Adrenal gland (tissue), 19 donors: ENCODE measurements at regions of chr15 and their contacts with region 1.

Region 1: DNA sequence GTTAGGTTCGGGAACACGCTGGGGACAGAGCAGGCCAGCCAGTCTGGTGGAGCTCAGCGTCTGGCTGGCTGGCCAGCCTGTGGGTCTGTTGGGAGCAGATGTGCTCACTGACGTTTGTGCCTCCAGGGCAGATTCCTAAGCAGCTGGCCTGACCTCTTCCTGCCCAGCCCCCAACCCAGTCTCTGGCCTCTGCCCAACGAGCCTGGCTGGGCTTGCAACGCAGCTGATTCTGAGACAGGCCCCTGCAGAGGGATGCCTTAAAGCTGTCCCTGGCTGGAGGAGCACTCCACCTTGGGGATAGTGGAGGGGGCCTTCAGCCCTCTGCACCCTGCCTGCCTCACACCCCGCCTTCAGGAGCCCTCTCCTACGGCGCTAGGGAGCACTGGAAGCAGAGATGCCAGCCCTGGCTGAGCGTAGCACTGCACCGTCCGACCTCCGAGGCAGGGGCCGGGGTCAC is 46.0 kb downstream of the KLF13 start:
- DNase-seq: peak; percentile 39 to 90 (median 71)
- H3K4me3 ChIP-seq: no peak overlapping the region
- H3K27ac ChIP-seq: peak overlapping the region in 3 of 5 donors; percentile 22 to 83 (median 64)
- H3K4me1 ChIP-seq: peaks cover 0 to 47% of the 10 kb centered on the region in 2 donors
- H3K27me3 ChIP-seq: no peaks in the 10 kb centered on the region
- CTCF ChIP-seq: no peak
- POLR2A ChIP-seq: peak in 1 of 2 donors; percentile 11

Region 2: DNA sequence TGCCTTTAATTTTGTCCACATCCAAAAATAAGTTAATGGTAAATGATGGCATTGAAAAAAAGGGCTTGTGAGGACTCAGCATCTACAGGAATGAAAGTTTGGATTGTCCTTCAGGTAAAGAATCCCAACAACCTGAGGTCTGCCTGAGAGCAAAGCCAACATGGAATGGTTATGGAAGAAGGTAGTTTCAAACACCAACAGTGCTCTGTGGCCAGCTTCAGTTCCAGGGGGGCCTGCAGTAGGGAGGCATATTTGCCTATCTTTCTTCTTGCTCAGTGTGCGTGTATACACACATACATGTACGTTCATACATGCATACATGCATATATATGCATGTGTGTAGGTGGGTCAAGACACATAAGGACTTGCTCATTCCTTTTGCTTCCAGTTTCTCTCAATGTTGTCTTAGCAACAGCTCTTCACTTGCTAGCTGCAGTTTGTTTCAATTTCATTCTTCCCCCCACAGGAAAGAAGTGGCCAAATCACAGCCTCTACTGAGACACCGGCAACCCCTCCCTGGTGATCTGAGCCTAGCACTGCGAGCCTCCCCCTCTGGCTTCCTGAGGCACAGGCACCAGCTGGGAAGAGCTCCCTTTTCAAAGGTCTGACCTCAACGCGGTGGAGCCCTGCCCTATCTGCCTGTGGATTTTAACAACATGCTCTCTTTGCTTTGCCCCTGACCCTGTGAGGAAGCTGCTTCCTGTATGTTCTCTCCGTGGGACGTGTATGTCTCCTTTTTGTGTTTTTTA is 100.1 kb after region 1 on chr15:
- intact Hi-C with region 1: loop called in 1 of 2 experiments (anchors 10 kb)
- DNase-seq: peak in 5 of 7 donors; percentile 15 to 72 (median 25)
- H3K4me3 ChIP-seq: peak overlapping the region in 1 of 4 donors; percentile 1
- H3K27ac ChIP-seq: peak overlapping the region in 3 of 5 donors; percentile 11 to 21 (median 15)
- H3K4me1 ChIP-seq: no peaks in the 10 kb centered on the region
- H3K27me3 ChIP-seq: no peaks in the 10 kb centered on the region
- CTCF ChIP-seq: no peak
- POLR2A ChIP-seq: no peak